CD8-positive, alpha-beta T cell (primary cell): ENCODE measurements at regions of chr7 and their contacts with region 1.

Region 1: GRCh38 chr7:50696810-50697582 is 85.7 kb downstream of the GRB10 start:
- DNase-seq: peak in 3 of 9 experiments; percentile 23 to 41 (median 30)
- ATAC-seq: no peak
- H3K4me3 ChIP-seq: no peak overlapping the region
- H3K4me3 Mint-ChIP-seq: no peak overlapping the region
- H3K27ac ChIP-seq: no peak overlapping the region
- H3K27ac Mint-ChIP-seq: no peak overlapping the region
- H3K4me1 ChIP-seq: no peaks in the 10 kb centered on the region
- H3K4me1 Mint-ChIP-seq: peaks cover 6% of the 10 kb centered on the region
- H3K27me3 ChIP-seq: no peaks in the 10 kb centered on the region
- H3K27me3 Mint-ChIP-seq: no peaks in the 10 kb centered on the region
- CTCF ChIP-seq: peak; percentile 47

Region 2: GRCh38 chr7:50739744-50740435 is 42.9 kb after region 1 on chr7:
- CTCF ChIA-PET with region 1: no interaction called
- POLR2A ChIA-PET with region 1: no interaction called
- intact Hi-C with region 1: loop called in 1 of 2 experiments (anchors 5 kb)
- DNase-seq: peak; percentile 29 to 91 (median 69)
- ATAC-seq: peak; percentile 98
- H3K4me3 ChIP-seq: peak overlapping the region; percentile 2 to 24
- H3K4me3 Mint-ChIP-seq: peak overlapping the region; percentile 75
- H3K27ac ChIP-seq: peak overlapping the region; percentile 64 to 72
- H3K27ac Mint-ChIP-seq: peak overlapping the region; percentile 93
- H3K4me1 ChIP-seq: peaks cover 19% of the 10 kb centered on the region
- H3K4me1 Mint-ChIP-seq: peaks cover 28% of the 10 kb centered on the region
- H3K27me3 ChIP-seq: no peaks in the 10 kb centered on the region
- H3K27me3 Mint-ChIP-seq: no peaks in the 10 kb centered on the region
- CTCF ChIP-seq: no peak

Region 3: DNA sequence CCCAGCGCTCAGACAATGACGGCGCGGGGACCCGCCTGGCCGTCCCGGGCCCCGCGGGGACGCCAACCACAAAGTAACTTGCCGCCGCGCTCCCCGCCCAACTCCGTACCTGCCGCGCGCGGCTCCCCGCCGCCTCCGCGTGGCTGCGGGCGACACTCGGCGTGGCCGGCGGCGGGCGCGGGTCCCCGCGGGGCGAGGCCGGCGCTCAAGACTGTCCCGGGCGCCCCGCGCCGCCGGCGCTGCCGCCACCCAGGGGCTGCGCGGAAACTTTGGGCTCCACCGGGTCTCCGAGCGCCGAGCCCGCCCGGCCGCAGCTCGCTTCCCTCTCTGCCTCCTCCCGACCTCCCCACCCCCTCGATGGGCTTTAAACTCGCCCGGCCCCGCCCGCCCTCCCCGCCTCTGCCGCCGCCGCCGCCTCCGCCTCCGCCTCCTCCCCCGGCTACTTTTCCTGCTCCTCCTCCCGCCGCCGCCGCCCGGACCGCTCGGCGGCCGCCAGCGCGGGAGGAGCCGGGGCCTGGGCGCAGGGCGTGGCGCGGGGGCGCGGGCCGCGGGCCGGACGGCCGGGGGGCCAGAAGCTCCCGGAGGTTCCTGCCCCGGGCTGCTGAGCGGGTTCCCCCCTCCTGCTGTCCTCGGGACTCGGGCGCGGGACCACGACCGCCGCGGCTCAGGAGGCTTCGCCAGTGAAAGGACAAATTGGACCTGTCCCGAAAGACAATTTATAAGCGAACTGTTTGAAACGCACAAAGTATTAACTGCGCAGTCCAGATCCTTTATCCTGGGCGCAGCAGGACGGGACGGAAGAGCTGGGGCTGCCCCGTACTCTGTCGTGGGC is 96.3 kb after region 1 on chr7:
- CTCF ChIA-PET with region 1: no interaction called
- POLR2A ChIA-PET with region 1: no interaction called
- intact Hi-C with region 1: loop called (anchors 2 to 5 kb)
- DNase-seq: peak in 3 of 9 experiments; percentile 32 to 35 (median 35)
- ATAC-seq: peak; percentile 49
- H3K4me3 ChIP-seq: peak overlapping the region in 1 of 2 experiments; percentile 28
- H3K4me3 Mint-ChIP-seq: peak overlapping the region; percentile 76
- H3K27ac ChIP-seq: no peak overlapping the region
- H3K27ac Mint-ChIP-seq: no peak overlapping the region
- H3K4me1 ChIP-seq: peaks cover 8% of the 10 kb centered on the region
- H3K4me1 Mint-ChIP-seq: peaks cover 11% of the 10 kb centered on the region
- H3K27me3 ChIP-seq: peaks cover 2 to 4% of the 10 kb centered on the region in 2 experiments
- H3K27me3 Mint-ChIP-seq: peaks cover 44% of the 10 kb centered on the region
- CTCF ChIP-seq: no peak

Region 4: GRCh38 chr7:51067757-51068156 is 370.8 kb after region 1 on chr7:
- CTCF ChIA-PET with region 1: no interaction called
- POLR2A ChIA-PET with region 1: no interaction called
- intact Hi-C with region 1: loop called (anchors 2 to 5 kb)
- DNase-seq: peak in 7 of 9 experiments; percentile 9 to 53 (median 43)
- ATAC-seq: no peak
- H3K4me3 ChIP-seq: no peak overlapping the region
- H3K4me3 Mint-ChIP-seq: no peak overlapping the region
- H3K27ac ChIP-seq: no peak overlapping the region
- H3K27ac Mint-ChIP-seq: no peak overlapping the region
- H3K4me1 ChIP-seq: no peaks in the 10 kb centered on the region
- H3K4me1 Mint-ChIP-seq: no peaks in the 10 kb centered on the region
- H3K27me3 ChIP-seq: no peaks in the 10 kb centered on the region
- H3K27me3 Mint-ChIP-seq: no peaks in the 10 kb centered on the region
- CTCF ChIP-seq: peak; percentile 54

Region 5: GRCh38 chr7:51141451-51142003 is 444.5 kb after region 1 on chr7:
- CTCF ChIA-PET with region 1: interaction called, 4 read pairs
- POLR2A ChIA-PET with region 1: no interaction called
- intact Hi-C with region 1: loop called (anchors 5 kb)
- DNase-seq: peak in 2 of 9 experiments; percentile 12 to 21
- ATAC-seq: no peak
- H3K4me3 ChIP-seq: no peak overlapping the region
- H3K4me3 Mint-ChIP-seq: no peak overlapping the region
- H3K27ac ChIP-seq: no peak overlapping the region
- H3K27ac Mint-ChIP-seq: no peak overlapping the region
- H3K4me1 ChIP-seq: no peaks in the 10 kb centered on the region
- H3K4me1 Mint-ChIP-seq: no peaks in the 10 kb centered on the region
- H3K27me3 ChIP-seq: no peaks in the 10 kb centered on the region
- H3K27me3 Mint-ChIP-seq: no peaks in the 10 kb centered on the region
- CTCF ChIP-seq: no peak